Naive thymus-derived CD8-positive, alpha-beta T cell (primary cell): ENCODE measurements at regions of chr17 and their contacts with region 1.

Region 1: GRCh38 chr17:63621766-63622519 is at the start of gene MAP3K3:
- DNase-seq: peak; percentile 86 to 99 (median 98)
- ATAC-seq: peak; percentile 88 to 93
- H3K4me3 Mint-ChIP-seq: peak within 1 kb of the TSS; percentile 94 to 99 (median 97)
- H3K27ac Mint-ChIP-seq: peak within 1 kb of the TSS; percentile 87 to 96 (median 94)
- H3K4me1 Mint-ChIP-seq: peaks cover 16 to 51% (median 43%) of the 10 kb centered on the region in 4 donors
- H3K27me3 Mint-ChIP-seq: no peaks in the 10 kb centered on the region
- polyA plus RNA-seq, gene MAP3K3: 23.8 to 47.4 (median 24.7) TPM

Region 2: DNA sequence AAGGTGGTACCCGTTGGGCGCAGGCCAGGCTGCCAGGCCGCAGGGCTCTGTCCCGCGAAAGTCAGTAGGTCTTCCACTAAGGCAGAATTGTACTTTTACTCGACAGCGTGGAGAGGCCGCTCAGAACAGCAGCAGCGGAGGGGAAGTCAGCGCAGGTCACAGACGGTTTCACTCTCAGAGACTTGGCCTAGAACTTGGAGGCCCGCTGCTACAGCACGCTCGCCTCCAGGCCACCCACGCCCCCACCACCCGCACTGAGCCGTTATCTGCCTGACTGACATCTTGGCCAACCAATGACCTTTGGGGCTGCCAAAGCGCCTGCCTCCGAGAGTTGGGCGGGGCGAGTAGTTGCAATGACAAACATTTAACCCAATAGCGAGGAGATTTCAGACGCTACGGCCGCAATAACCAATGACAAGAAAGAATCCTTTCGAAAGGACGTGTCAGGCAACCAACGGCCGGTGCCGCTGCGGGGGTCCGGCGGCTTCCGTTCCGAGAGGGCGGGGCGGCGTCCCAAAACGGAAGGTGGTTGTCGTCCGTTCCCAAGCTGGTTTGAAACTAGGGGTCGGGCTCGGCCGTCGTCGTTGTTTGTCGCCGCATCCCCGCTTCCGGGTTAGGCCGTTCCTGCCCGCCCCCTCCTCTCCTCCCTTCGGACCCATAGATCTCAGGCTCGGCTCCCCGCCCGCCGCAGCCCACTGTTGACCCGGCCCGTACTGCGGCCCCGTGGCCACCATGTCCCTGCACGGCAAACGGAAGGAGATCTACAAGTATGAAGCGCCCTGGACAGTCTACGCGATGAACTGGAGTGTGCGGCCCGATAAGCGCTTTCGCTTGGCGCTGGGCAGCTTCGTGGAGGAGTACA is 71.8 kb before region 1 on chr17 and contains the start of gene DCAF7:
- POLR2A ChIA-PET with region 1: interaction called, 16 read pairs
- DNase-seq: peak; percentile 97 to 100 (median 99)
- ATAC-seq: peak; percentile 93 to 95
- H3K4me3 Mint-ChIP-seq: peak within 1 kb of the TSS; percentile 89 to 99 (median 97)
- H3K27ac Mint-ChIP-seq: peak within 1 kb of the TSS; percentile 77 to 98 (median 96)
- H3K4me1 Mint-ChIP-seq: peaks cover 15 to 55% (median 48%) of the 10 kb centered on the region in 4 donors
- H3K27me3 Mint-ChIP-seq: no peaks in the 10 kb centered on the region
- polyA plus RNA-seq, gene DCAF7: 57.8 to 77.5 (median 75.6) TPM

Region 3: GRCh38 chr17:63587770-63588169 is 34.2 kb before region 1 on chr17:
- POLR2A ChIA-PET with region 1: no interaction called
- DNase-seq: no peak
- ATAC-seq: no peak
- H3K4me3 Mint-ChIP-seq: no peak overlapping the region
- H3K27ac Mint-ChIP-seq: no peak overlapping the region
- H3K4me1 Mint-ChIP-seq: peaks cover 12 to 20% (median 16%) of the 10 kb centered on the region in 4 donors
- H3K27me3 Mint-ChIP-seq: no peaks in the 10 kb centered on the region

Region 4: DNA sequence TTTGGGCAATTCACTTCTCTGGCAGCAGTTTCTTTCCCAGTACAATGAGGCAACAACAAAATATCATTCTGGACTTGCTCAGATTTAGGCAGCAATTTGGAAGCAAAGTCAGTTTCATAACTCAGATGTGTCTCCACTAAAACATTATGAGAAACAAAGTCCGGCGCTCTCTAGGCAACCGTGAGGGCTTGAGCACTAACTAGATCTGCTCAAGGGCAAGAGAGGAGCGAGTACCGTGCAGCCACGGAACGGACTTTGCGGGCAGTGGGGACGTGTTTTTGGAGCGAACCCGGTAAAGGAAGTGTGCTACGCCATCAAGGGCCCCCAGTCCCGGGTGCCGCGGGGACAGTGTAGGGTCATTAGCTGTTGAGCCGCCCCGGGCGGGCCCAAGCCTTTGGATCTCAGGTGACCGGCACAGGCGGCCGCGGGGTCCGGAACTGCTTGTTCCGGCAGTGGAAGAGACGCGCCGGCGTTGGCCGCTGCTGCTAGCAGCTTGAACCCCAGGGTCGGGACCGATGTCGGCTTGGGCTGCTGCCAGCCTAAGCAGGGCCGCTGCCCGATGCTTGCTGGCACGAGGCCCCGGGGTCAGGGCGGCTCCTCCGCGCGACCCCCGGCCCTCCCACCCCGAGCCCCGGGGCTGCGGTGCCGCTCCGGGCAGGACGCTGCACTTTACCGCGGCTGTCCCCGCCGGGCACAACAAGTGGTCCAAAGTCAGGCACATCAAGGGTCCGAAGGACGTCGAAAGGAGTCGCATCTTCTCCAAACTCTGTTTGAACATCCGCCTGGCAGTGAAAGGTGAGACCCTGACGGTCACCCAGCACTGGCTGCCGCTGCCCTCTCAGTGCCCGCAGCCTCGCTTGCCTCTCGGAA is 21.1 kb before region 1 on chr17 and contains the start of gene TACO1:
- POLR2A ChIA-PET with region 1: interaction called, 15 read pairs
- DNase-seq: peak; percentile 47 to 83 (median 70)
- ATAC-seq: peak; percentile 92 to 96
- H3K4me3 Mint-ChIP-seq: peak within 1 kb of the TSS; percentile 87 to 96 (median 94)
- H3K27ac Mint-ChIP-seq: peak within 1 kb of the TSS; percentile 93 to 97 (median 96)
- H3K4me1 Mint-ChIP-seq: peaks cover 13 to 40% (median 28%) of the 10 kb centered on the region in 4 donors
- H3K27me3 Mint-ChIP-seq: no peaks in the 10 kb centered on the region
- polyA plus RNA-seq, gene TACO1: 11.3 to 18.3 (median 17.5) TPM

Region 5: GRCh38 chr17:63611354-63611753 is 10.6 kb before region 1 on chr17:
- POLR2A ChIA-PET with region 1: interaction called, 15 read pairs
- DNase-seq: peak in 2 of 10 donors; percentile 40 to 49
- ATAC-seq: peak; percentile 23 to 68
- H3K4me3 Mint-ChIP-seq: peak overlapping the region in 7 of 10 donors; percentile 18 to 62 (median 49)
- H3K27ac Mint-ChIP-seq: peak overlapping the region; percentile 75 to 96 (median 90)
- H3K4me1 Mint-ChIP-seq: peaks cover 14 to 30% (median 29%) of the 10 kb centered on the region in 4 donors
- H3K27me3 Mint-ChIP-seq: no peaks in the 10 kb centered on the region

Region 6: DNA sequence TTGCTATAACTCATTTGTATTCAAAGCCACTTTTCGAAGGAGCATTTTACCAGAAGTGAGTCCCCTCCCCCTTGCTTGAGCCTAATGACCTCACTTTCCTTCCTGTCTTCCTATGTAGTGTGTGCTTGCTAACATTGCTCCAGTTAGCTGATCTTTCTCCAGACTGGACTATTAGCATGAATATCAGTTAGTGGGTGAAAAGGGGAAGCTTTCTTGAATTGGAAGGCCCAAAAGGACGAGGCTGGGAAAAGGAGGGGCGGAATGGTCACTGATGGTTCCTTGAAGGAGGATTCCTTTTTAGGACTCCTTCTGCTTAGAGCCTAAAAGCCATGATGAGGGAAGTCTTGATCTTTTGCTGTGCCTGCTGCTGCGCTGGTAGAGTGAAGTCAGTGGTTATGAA is 12.2 kb after region 1 on chr17:
- POLR2A ChIA-PET with region 1: interaction called, 14 read pairs
- DNase-seq: no peak
- ATAC-seq: no peak
- H3K4me3 Mint-ChIP-seq: no peak overlapping the region
- H3K27ac Mint-ChIP-seq: peak overlapping the region in 4 of 10 donors; percentile 13 to 61 (median 47)
- H3K4me1 Mint-ChIP-seq: peaks cover 34 to 59% (median 48%) of the 10 kb centered on the region in 4 donors
- H3K27me3 Mint-ChIP-seq: no peaks in the 10 kb centered on the region

Region 7: GRCh38 chr17:63647065-63647725 is 25.3 kb after region 1 on chr17:
- POLR2A ChIA-PET with region 1: no interaction called
- DNase-seq: no peak
- ATAC-seq: no peak
- H3K4me3 Mint-ChIP-seq: no peak overlapping the region
- H3K27ac Mint-ChIP-seq: no peak overlapping the region
- H3K4me1 Mint-ChIP-seq: peaks cover 8 to 49% (median 17%) of the 10 kb centered on the region in 4 donors
- H3K27me3 Mint-ChIP-seq: no peaks in the 10 kb centered on the region

Region 8: DNA sequence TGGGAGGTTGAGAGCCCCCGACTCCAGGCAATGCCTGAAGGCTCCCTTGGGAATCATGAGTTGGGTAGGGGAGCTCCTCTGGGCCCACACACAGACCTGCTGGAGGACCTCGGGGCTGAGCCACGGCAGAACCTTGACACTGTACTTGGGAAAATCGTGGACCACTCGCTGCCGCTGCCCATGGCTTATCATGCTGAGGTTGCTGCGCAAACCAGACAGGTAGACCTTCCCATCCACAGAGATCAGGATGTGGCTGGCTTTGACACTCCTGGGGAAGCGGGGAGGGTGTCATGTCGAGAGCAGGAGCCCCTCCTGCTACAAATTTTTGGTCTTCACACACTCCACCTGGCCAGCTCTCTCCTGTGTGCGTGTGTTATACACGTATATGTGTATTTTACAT is 85.2 kb after region 1 on chr17:
- POLR2A ChIA-PET with region 1: interaction called, 178 read pairs
- DNase-seq: peak in 5 of 10 donors; percentile 54 to 65 (median 58)
- ATAC-seq: peak; percentile 23 to 67
- H3K4me3 Mint-ChIP-seq: peak overlapping the region; percentile 69 to 98 (median 82)
- H3K27ac Mint-ChIP-seq: peak overlapping the region; percentile 75 to 99 (median 95)
- H3K4me1 Mint-ChIP-seq: peaks cover 42 to 84% (median 79%) of the 10 kb centered on the region in 4 donors
- H3K27me3 Mint-ChIP-seq: no peaks in the 10 kb centered on the region